ENCODE measurements at regions of chr10 and their contacts with region 1.

Region 1: DNA sequence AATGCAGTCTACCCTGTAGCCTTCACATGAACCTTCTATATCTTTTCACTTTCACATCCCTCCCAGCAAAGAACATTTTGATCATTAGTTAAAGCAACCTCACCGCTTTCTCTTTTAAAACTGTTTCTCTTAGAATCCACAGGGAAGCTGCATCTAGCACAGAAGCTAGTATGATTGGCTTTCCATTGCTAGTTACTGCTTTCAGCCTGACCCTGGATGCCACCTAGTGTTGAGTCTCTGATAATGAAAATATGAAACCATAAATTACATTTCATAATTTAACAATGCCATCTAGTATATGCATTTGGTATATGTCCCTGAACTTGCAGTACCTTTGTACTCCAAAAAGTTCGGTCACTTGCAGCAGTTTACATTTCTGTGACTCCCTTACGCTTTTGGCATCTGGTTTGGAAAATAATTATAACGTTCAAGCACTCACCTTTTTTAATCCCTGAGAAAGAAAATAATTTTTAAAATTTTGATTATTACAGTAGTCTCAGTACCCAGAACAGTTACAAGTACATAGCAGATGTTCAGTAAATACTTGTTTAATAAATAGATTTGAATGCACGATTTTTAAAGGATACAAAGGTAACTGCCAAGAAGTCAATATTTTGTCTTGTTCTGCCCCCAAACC is 22.7 kb downstream of the CISD1 start:
- DNase-seq: no peak
- H3K4me3 ChIP-seq: no peak overlapping the region
- H3K27ac ChIP-seq: no peak overlapping the region
- H3K4me1 ChIP-seq: no peaks in the 10 kb centered on the region
- H3K27me3 ChIP-seq: no peaks in the 10 kb centered on the region
- CTCF ChIP-seq: peak; percentile 58 to 81 (median 76)

Region 2: DNA sequence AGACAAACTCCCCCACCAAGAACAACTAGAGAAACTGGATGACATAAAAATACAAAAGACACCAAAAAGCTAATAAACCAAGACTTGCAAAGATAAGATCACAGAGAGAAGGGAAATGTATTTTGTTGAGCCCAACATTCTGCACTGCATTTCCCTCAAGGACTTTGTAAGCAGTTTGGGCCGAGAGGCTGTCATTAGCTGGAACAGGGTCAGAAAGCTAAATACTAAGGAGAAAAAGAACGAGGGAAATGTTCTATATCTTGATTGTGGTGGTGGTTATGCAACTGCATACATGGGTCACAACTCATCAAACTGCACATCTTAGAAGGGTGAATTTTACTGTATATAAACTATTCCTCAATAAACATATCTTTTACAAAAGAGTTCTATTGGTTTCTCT is 338.9 kb before region 1 on chr10:
- intact Hi-C with region 1: no loop called
- DNase-seq: no peak
- H3K4me3 ChIP-seq: no peak overlapping the region
- H3K27ac ChIP-seq: no peak overlapping the region
- H3K4me1 ChIP-seq: no peaks in the 10 kb centered on the region
- H3K27me3 ChIP-seq: no peaks in the 10 kb centered on the region
- CTCF ChIP-seq: no peak

Region 3: GRCh38 chr10:58177362-58177947 is 114.2 kb before region 1 on chr10:
- intact Hi-C with region 1: loop called (anchors 1 kb)
- DNase-seq: no peak
- H3K4me3 ChIP-seq: no peak overlapping the region
- H3K27ac ChIP-seq: no peak overlapping the region
- H3K4me1 ChIP-seq: no peaks in the 10 kb centered on the region
- H3K27me3 ChIP-seq: no peaks in the 10 kb centered on the region
- CTCF ChIP-seq: peak; percentile 37 to 67 (median 59)

Region 4: DNA sequence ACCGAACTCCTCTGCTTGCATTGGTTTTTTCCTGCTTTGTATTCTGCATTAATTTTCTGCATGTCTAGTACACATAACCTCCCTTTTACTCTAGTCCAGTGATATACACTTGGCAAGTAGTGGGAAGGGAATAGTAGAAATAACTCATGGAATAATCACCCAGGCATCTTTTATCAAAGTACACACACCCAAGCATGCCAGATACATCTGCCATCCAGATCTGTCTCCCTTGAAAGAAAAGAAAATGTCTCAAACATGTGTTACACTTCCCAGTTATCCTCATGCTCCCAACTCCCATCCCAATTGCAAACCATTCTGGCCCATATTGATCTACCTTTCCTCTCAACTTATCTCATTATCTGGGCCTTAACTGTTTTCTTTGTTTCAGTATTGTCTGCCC is 963.8 kb after region 1 on chr10:
- intact Hi-C with region 1: no loop called
- DNase-seq: no peak
- H3K4me3 ChIP-seq: no peak overlapping the region
- H3K27ac ChIP-seq: no peak overlapping the region
- H3K4me1 ChIP-seq: no peaks in the 10 kb centered on the region
- H3K27me3 ChIP-seq: no peaks in the 10 kb centered on the region
- CTCF ChIP-seq: no peak

Measured in ascending aorta (tissue), 2 donors.